CD8-positive, alpha-beta T cell (primary cell): ENCODE measurements at regions of chr1 and their contacts with region 1.

Region 1: DNA sequence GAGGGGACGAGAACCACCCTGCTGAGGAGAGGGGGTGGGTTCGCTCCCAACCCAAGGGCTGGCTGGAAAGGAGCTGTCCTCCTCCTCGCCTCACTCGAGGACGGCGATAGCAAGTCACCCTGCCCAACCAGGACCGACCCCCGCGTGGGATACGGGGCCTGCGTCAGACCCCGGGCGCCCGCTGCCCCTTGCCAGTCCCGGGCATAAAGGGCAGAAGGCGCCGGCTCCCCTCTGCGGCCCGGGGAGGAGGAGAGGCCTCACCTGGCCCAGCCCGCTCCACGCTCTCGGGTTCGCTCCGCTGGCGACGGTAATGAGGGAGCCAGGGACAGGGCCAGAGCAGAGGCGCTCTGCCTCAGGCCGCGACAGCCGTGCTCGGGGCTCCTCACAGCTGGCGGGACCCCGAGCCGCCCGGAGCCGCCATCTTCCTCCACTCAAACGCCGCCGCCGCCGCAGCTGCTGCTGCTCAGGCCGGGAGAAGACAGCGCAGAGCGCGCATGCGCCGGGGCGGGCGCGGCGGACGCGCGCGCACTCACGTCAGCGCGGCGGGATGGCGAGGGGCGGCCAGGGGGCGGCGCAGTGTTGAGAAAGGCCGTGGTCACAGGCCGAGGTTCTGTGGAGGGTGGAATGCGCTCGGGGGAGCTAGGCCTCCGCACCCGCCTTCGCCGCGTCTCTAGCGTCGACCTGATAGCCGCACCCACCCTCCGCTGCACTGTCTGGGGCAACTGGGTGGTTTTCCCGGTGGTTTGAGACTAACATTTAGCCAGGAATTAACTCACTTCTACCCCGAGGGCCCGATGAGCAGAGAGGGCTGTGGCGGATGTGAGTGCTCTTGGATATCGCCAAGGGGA is at the start of gene FBXO42:
- DNase-seq: peak; percentile 82 to 97 (median 91)
- ATAC-seq: peak; percentile 90
- H3K4me3 ChIP-seq: peak within 1 kb of the TSS; percentile 59 to 89
- H3K4me3 Mint-ChIP-seq: peak within 1 kb of the TSS; percentile 92
- H3K27ac ChIP-seq: peak within 1 kb of the TSS; percentile 74 to 96
- H3K27ac Mint-ChIP-seq: peak within 1 kb of the TSS; percentile 93
- H3K4me1 ChIP-seq: peaks cover 22% of the 10 kb centered on the region
- H3K4me1 Mint-ChIP-seq: peaks cover 33% of the 10 kb centered on the region
- H3K27me3 ChIP-seq: no peaks in the 10 kb centered on the region
- H3K27me3 Mint-ChIP-seq: no peaks in the 10 kb centered on the region
- CTCF ChIP-seq: peak; percentile 37
- total RNA-seq, gene FBXO42: 18.0 to 18.2 TPM

Region 2: DNA sequence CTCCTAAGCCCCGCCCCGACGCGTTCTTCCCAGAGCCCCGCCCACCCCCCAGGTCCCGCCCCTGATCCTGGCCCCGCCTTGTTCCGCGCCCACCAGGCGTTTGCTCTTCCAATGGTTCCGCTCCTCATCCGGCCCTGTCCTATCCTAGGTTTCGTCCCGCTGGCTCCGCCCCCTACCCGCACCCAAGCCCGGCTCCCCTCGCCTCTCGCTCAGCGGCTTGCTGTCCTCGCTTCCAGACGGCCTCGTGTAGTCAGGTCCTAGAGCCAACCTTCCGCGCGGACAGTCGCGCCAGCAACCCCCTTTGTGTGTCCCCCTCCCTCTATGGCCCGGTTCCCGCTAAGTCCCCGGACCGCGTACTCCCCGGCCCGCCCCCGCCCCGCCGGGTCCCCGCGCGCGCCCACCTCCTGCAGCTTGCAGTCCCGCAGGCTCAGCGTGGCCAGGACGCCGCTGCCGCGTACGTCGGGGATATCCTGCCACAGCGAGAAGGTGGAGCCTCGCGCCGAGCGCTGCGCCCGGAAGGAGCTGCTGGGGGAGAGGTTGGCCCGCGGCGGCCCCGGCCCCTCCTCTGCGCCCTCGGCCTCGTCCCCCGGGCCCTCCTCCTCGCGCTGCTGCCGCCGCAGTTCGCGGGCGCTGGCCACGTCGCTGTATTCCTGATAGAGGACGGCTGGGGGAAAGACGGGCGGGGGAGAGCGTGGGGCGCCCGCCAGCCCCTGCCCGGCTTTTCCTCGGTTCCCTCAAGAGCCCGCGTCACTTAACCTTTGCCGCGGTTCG is 145.5 kb before region 1 on chr1:
- CTCF ChIA-PET with region 1: no interaction called
- POLR2A ChIA-PET with region 1: interaction called, 5 read pairs
- intact Hi-C with region 1: loop called (anchors 2 kb)
- DNase-seq: peak; percentile 84 to 97 (median 93)
- ATAC-seq: peak; percentile 86
- H3K4me3 ChIP-seq: peak overlapping the region; percentile 68 to 83
- H3K4me3 Mint-ChIP-seq: peak overlapping the region; percentile 93
- H3K27ac ChIP-seq: peak overlapping the region; percentile 69 to 87
- H3K27ac Mint-ChIP-seq: peak overlapping the region; percentile 95
- H3K4me1 ChIP-seq: peaks cover 14% of the 10 kb centered on the region
- H3K4me1 Mint-ChIP-seq: peaks cover 10% of the 10 kb centered on the region
- H3K27me3 ChIP-seq: no peaks in the 10 kb centered on the region
- H3K27me3 Mint-ChIP-seq: no peaks in the 10 kb centered on the region
- CTCF ChIP-seq: no peak

Region 3: GRCh38 chr1:17053685-17054410 is 701.6 kb after region 1 on chr1 and contains the start of gene SDHB:
- CTCF ChIA-PET with region 1: no interaction called
- POLR2A ChIA-PET with region 1: no interaction called
- intact Hi-C with region 1: loop called in 1 of 2 experiments (anchors 2 kb)
- DNase-seq: peak; percentile 97 to 100 (median 99)
- ATAC-seq: peak; percentile 98
- H3K4me3 ChIP-seq: peak within 1 kb of the TSS; percentile 53 to 90
- H3K4me3 Mint-ChIP-seq: peak within 1 kb of the TSS; percentile 99
- H3K27ac ChIP-seq: peak within 1 kb of the TSS; percentile 67 to 84
- H3K27ac Mint-ChIP-seq: peak within 1 kb of the TSS; percentile 98
- H3K4me1 ChIP-seq: peaks cover 16% of the 10 kb centered on the region
- H3K4me1 Mint-ChIP-seq: peaks cover 33% of the 10 kb centered on the region
- H3K27me3 ChIP-seq: no peaks in the 10 kb centered on the region
- H3K27me3 Mint-ChIP-seq: peaks cover 6% of the 10 kb centered on the region
- CTCF ChIP-seq: no peak
- total RNA-seq, gene SDHB: 66.2 to 71.8 TPM